A549 (cell line): ENCODE measurements at regions of chr1 and their contacts with region 1.

Region 1: GRCh38 chr1:25204797-25205480 is 27.4 kb downstream of the SYF2 start:
- DNase-seq: peak; percentile 32 to 42
- ATAC-seq: peak; percentile 70; a peak in 4 of 6 replicates
- H3K4me3 ChIP-seq: no peak overlapping the region
- H3K27ac ChIP-seq: no peak overlapping the region
- H3K4me1 ChIP-seq: no peaks in the 10 kb centered on the region
- CTCF ChIP-seq: peak; percentile 69
- EP300 ChIP-seq: no peak
- POLR2A ChIP-seq: no peak
- RAD21 ChIP-seq: peak; percentile 64 to 68

Region 2: GRCh38 chr1:24930204-24931145 is 274.5 kb before region 1 on chr1 and contains the start of gene RUNX3:
- CTCF ChIA-PET with region 1: interaction called, 10 read pairs
- POLR2A ChIA-PET with region 1: no interaction called
- DNase-seq: peak; percentile 71 to 85
- ATAC-seq: peak; percentile 82 to 88
- H3K4me3 ChIP-seq: peak within 1 kb of the TSS; percentile 52
- H3K27ac ChIP-seq: peak within 1 kb of the TSS; percentile 53 to 88
- H3K4me1 ChIP-seq: peaks cover 3% of the 10 kb centered on the region; the same call in 1 of the 3 replicates
- CTCF ChIP-seq: no peak
- EP300 ChIP-seq: no peak
- POLR2A ChIP-seq: no peak
- RAD21 ChIP-seq: no peak
- polyA plus RNA-seq, gene RUNX3: 1.4 and 2.6 TPM in 2 replicates

Region 3: DNA sequence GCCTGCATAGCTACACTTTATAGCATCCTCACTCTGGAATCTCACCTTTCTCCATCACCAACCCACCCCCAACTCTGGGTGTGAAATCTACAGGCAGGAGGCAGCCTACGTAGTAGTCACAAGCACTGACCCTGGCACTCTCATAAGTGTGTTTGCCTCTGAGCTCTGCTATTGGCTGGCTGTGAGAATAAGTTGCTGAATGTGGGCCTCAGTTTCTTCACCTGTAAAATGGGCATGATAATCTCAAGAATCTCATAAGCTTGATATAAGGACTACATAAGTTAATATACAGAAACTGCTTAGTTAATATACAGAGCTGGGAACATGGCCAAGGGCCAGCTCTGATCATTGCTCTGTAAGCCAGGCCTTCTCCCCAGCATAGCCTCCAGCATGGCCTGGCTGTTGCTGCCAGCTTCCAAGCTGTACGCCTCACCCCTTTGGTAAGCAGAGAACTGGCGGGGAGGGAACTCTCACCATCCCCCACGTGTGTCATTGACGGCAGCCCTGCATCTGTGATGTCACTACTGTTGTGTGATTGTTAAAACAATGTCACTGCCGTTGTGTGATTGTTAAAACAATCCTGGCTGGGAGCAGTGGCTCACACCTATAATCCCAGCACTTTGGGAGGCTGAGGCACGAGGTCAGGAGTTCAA is 25.9 kb before region 1 on chr1:
- CTCF ChIA-PET with region 1: interaction called, 12 read pairs
- POLR2A ChIA-PET with region 1: no interaction called
- DNase-seq: no peak
- ATAC-seq: no peak
- H3K4me3 ChIP-seq: no peak overlapping the region
- H3K27ac ChIP-seq: no peak overlapping the region
- H3K4me1 ChIP-seq: no peaks in the 10 kb centered on the region
- CTCF ChIP-seq: no peak
- EP300 ChIP-seq: no peak
- POLR2A ChIP-seq: no peak
- RAD21 ChIP-seq: no peak

Region 4: GRCh38 chr1:25194572-25195020 is 10.3 kb before region 1 on chr1:
- CTCF ChIA-PET with region 1: interaction called, 19 read pairs
- POLR2A ChIA-PET with region 1: no interaction called
- DNase-seq: no peak
- ATAC-seq: no peak
- H3K4me3 ChIP-seq: no peak overlapping the region
- H3K27ac ChIP-seq: no peak overlapping the region
- H3K4me1 ChIP-seq: no peaks in the 10 kb centered on the region
- CTCF ChIP-seq: no peak
- EP300 ChIP-seq: no peak
- POLR2A ChIP-seq: no peak
- RAD21 ChIP-seq: no peak